ENCODE measurements at regions of chr3 and their contacts with region 1.

Region 1: DNA sequence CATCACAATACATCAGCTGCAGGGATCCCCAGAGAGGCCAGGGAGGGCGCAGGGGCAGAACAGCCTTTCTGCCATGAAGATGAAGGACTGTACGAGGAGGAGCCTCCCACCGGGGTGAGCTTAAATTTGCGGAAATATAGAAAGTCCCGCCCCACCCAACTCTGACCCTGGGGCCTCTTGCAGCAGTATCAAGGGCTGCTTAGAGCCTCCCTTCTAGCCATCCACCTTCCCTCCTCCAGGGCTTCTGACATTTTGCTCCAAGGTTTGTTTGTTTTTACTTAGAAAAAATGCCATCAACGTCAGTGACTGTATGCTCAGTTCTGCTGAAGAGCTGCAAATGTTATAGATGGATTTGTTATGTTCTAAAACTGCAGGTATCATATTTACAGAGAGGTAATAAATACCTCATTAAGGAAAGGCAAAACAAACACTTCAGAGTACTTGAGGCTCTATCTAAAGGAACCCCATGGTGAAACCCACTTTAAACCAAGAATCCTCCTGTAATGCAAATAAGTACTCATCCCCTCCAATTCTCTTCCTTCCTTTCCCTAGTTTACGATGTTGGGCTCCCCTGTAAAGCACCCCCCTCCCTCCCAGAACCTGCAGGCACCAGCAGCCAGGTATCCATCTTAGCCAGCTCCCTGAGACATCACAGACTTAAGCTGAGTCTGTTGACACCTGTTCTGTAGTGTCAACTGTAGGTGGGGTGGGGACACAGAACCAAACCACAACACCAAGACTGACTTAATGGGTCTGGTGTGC is 30.5 kb downstream of the RFTN1 start:
- DNase-seq: peak in 8 of 9 experiments; percentile 6 to 69 (median 46)
- ATAC-seq: peak; percentile 72
- H3K4me3 ChIP-seq: peak overlapping the region in 1 of 2 experiments; percentile 4
- H3K4me3 Mint-ChIP-seq: peak overlapping the region; percentile 71
- H3K27ac ChIP-seq: peak overlapping the region; percentile 24 to 78
- H3K27ac Mint-ChIP-seq: peak overlapping the region; percentile 89
- H3K4me1 ChIP-seq: peaks cover 38% of the 10 kb centered on the region
- H3K4me1 Mint-ChIP-seq: peaks cover 87% of the 10 kb centered on the region
- H3K27me3 ChIP-seq: no peaks in the 10 kb centered on the region
- H3K27me3 Mint-ChIP-seq: no peaks in the 10 kb centered on the region
- CTCF ChIP-seq: no peak

Region 2: GRCh38 chr3:16467393-16467792 is 15.6 kb before region 1 on chr3:
- CTCF ChIA-PET with region 1: interaction called, 3 read pairs
- POLR2A ChIA-PET with region 1: interaction called, 12 read pairs
- intact Hi-C with region 1: loop called in 1 of 2 experiments (anchors 2 kb)
- DNase-seq: peak in 5 of 9 experiments; percentile 20 to 85 (median 60)
- ATAC-seq: peak; percentile 66
- H3K4me3 ChIP-seq: no peak overlapping the region
- H3K4me3 Mint-ChIP-seq: peak overlapping the region; percentile 69
- H3K27ac ChIP-seq: peak overlapping the region; percentile 44 to 48
- H3K27ac Mint-ChIP-seq: peak overlapping the region; percentile 93
- H3K4me1 ChIP-seq: peaks cover 42% of the 10 kb centered on the region
- H3K4me1 Mint-ChIP-seq: peaks cover 70% of the 10 kb centered on the region
- H3K27me3 ChIP-seq: no peaks in the 10 kb centered on the region
- H3K27me3 Mint-ChIP-seq: no peaks in the 10 kb centered on the region
- CTCF ChIP-seq: no peak

Region 3: GRCh38 chr3:16516695-16517481 is 33.9 kb after region 1 on chr3:
- CTCF ChIA-PET with region 1: interaction called, 13 read pairs
- POLR2A ChIA-PET with region 1: interaction called, 16 read pairs
- intact Hi-C with region 1: loop called in 1 of 2 experiments (anchors 2 kb)
- DNase-seq: peak in 2 of 9 experiments; percentile 41 to 60
- ATAC-seq: no peak
- H3K4me3 ChIP-seq: no peak overlapping the region
- H3K4me3 Mint-ChIP-seq: peak overlapping the region; percentile 96
- H3K27ac ChIP-seq: peak overlapping the region in 1 of 2 experiments; percentile 74
- H3K27ac Mint-ChIP-seq: peak overlapping the region; percentile 16
- H3K4me1 ChIP-seq: peaks cover 42% of the 10 kb centered on the region
- H3K4me1 Mint-ChIP-seq: peaks cover 55% of the 10 kb centered on the region
- H3K27me3 ChIP-seq: no peaks in the 10 kb centered on the region
- H3K27me3 Mint-ChIP-seq: no peaks in the 10 kb centered on the region
- CTCF ChIP-seq: no peak